Posterior vena cava (tissue), 2 donors: ENCODE measurements at regions of chr5 and their contacts with region 1.

Region 1: GRCh38 chr5:179495906-179496455 is 54.4 kb upstream of the RUFY1 start:
- DNase-seq: peak; percentile 63

Region 2: DNA sequence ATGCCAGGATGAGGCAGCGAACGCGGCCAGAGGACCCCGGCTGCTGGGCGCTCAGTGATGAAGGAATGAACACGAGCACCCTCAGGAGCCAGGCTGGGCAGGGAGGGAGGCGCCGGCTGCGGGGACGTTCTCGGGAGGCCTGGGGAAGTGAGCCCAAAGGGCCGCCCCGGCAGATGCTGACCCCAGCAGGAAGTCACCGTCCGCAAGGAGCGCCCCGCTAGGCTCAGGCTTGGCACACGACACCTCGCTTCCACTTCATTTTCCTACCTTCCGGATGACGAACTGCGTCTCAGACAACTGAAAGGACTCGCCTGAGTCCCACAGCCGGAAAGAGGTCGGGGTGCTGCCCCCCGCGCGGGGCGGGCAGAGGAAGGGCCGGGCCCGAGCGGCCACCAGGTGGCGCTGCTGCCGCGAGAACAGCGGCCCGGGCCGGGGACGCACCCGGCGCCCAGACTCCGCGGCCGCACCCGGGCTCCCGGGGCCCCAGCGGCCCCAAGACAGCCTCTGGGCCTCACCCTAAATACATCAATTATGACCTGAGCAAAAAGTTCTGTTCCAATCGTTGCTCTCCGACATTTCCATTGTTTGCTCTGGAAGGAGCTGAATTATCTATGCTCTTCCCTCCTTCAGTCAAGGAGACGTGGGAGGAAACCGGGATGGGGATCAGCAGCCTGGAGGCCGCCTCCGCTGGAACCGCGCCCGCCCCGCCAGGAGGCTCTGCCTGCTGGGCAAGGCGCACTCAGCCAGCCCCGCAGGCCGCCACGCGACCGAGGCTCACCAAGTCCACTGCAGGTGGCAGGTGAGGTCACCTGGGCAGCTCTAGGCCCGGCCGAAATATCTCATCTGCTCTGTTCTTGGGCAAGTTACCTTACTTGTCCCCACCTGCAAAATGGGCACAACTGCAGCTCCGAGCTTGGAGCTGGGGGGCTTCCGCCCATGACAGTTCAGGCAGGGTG is 328.8 kb before region 1 on chr5:
- intact Hi-C with region 1: loop called (anchors 2 to 5 kb)
- DNase-seq: peak; percentile 84